Esophagus squamous epithelium (tissue), 5 donors: ENCODE measurements at regions of chr3 and their contacts with region 1.

Region 1: DNA sequence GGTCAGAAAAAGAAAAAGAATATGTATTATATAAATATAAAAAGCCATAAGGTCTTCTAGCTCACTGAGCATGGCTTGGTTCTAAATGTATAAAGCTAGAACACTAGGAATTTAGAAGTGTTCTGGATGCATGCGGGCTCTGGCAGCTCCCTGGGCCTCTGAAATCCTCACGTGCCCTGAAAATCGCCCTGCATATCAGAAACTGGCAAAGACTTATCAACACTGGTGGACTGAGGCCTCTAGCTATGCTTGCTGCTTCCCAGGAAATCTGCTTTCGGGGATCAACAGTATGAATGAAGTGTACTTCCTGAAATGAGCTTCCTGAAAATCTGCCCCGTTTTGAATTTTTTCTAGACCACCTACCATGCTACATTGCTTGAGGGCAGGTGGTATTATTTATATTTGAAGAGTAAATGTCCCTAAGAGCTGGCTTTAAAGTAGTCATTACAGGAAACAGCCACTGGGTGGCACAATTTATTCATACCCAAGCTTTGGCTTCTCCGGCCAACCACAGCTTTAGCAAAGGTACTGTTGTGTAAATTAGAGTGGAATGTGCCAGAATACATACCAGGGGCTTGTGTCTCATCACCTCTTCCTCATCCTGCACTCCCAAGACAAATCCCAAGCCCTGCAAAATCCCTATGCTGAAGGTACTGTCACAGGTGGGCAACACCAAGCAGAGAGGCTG is 17.7 kb downstream of the CRTAP start:
- DNase-seq: no peak
- H3K4me3 ChIP-seq: no peak overlapping the region
- H3K27ac ChIP-seq: peak overlapping the region in 1 of 4 donors; percentile 38
- H3K4me1 ChIP-seq: peaks cover 0 to 17% (median 0%) of the 10 kb centered on the region in 3 donors
- H3K27me3 ChIP-seq: no peaks in the 10 kb centered on the region
- CTCF ChIP-seq: peak; percentile 40 to 82 (median 74)
- POLR2A ChIP-seq: no peak

Region 2: GRCh38 chr3:33372218-33373081 is 241.0 kb after region 1 on chr3:
- intact Hi-C with region 1: loop called (anchors 5 kb)
- DNase-seq: no peak
- H3K4me3 ChIP-seq: no peak overlapping the region
- H3K27ac ChIP-seq: no peak overlapping the region
- H3K4me1 ChIP-seq: peaks cover 0 to 8% (median 0%) of the 10 kb centered on the region in 3 donors
- H3K27me3 ChIP-seq: no peaks in the 10 kb centered on the region
- CTCF ChIP-seq: peak; percentile 71 to 91 (median 89)
- POLR2A ChIP-seq: no peak